A549 (cell line): ENCODE measurements at regions of chr9 and their contacts with region 1.

Region 1: DNA sequence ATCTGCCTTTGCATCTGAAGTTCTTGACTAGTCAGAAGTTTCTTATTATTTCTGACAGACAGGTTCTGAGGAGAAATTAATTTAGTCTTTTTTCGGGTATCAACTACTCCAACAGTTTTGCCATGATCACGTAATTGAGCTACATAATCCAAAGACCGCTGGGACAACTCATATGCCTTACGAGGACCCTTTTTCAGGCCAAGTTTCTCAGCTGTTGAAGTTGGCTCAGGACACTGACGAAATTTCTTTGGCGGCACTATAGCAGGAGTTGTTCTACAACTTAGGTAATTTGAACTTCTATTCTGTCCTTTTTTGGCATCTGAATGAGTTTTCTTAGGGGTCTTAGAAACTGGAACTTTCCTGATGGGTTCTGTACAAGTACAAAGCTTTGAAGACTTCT is 27.2 kb downstream of the SETX start:
- DNase-seq: no peak
- ATAC-seq: no peak
- H3K4me3 ChIP-seq: no peak overlapping the region
- H3K27ac ChIP-seq: no peak overlapping the region
- H3K4me1 ChIP-seq: no peaks in the 10 kb centered on the region
- CTCF ChIP-seq: no peak
- EP300 ChIP-seq: no peak
- POLR2A ChIP-seq: no peak
- RAD21 ChIP-seq: no peak

Region 2: GRCh38 chr9:132312873-132313272 is 14.7 kb before region 1 on chr9:
- CTCF ChIA-PET with region 1: no interaction called
- POLR2A ChIA-PET with region 1: no interaction called
- DNase-seq: peak in 1 of 2 experiments; percentile 17
- ATAC-seq: peak; percentile 77
- H3K4me3 ChIP-seq: no peak overlapping the region
- H3K27ac ChIP-seq: no peak overlapping the region
- H3K4me1 ChIP-seq: no peaks in the 10 kb centered on the region
- CTCF ChIP-seq: no peak
- EP300 ChIP-seq: no peak
- POLR2A ChIP-seq: no peak
- RAD21 ChIP-seq: no peak

Region 3: GRCh38 chr9:132346177-132346576 is 18.6 kb after region 1 on chr9:
- CTCF ChIA-PET with region 1: interaction called, 10 read pairs
- POLR2A ChIA-PET with region 1: no interaction called
- DNase-seq: no peak
- ATAC-seq: no peak
- H3K4me3 ChIP-seq: no peak overlapping the region
- H3K27ac ChIP-seq: no peak overlapping the region
- H3K4me1 ChIP-seq: peaks cover 6% of the 10 kb centered on the region; the same call in 2 of the 3 replicates
- CTCF ChIP-seq: no peak
- EP300 ChIP-seq: no peak
- POLR2A ChIP-seq: no peak
- RAD21 ChIP-seq: no peak

Region 4: DNA sequence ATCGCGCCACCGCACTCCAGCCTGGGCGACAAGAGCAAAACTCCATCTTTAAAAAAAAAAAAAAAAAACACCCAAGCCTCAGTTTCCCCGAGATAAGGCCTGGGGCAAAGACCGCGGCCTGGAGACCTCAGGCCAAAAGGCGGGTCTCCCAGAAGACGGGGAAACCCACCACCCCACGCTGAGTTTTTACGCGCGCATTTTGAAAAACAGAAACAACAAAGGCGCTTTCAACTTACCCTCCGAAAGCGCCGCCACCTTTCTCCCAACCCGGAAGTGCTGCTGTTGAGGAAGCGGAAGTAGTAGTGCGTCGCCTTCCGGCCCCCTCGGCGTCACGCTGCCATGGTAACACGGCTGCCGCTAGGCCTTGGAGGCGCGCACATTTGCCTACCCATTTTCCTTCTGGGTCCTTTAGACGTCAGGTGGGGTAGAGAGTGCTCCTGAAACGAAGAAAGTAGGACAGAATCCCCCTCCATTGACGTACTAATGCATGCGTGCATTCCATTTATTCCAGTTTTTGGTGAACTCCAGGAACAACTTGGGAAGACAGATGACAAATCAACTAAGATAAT is 79.1 kb after region 1 on chr9 and contains the start of gene TTF1:
- CTCF ChIA-PET with region 1: no interaction called
- POLR2A ChIA-PET with region 1: no interaction called
- DNase-seq: peak; percentile 92 to 94
- ATAC-seq: peak; percentile 90
- H3K4me3 ChIP-seq: peak within 1 kb of the TSS; percentile 63
- H3K27ac ChIP-seq: peak within 1 kb of the TSS; percentile 70 to 92
- H3K4me1 ChIP-seq: peaks cover 15% of the 10 kb centered on the region
- CTCF ChIP-seq: no peak
- EP300 ChIP-seq: no peak
- POLR2A ChIP-seq: peak; percentile 69
- RAD21 ChIP-seq: no peak
- polyA plus RNA-seq, gene TTF1: 12.8 and 16.0 TPM in 2 replicates